Transverse colon (tissue), 4 donors: ENCODE measurements at regions of chr13 and their contacts with region 1.

Region 1: GRCh38 chr13:107211073-107211472 is 643.1 kb upstream of the ARGLU1 start:
- DNase-seq: peak; percentile 78
- H3K4me3 ChIP-seq: peak overlapping the region in 1 of 4 donors; percentile 5
- H3K27ac ChIP-seq: no peak overlapping the region
- H3K4me1 ChIP-seq: peaks cover 0 to 8% (median 3%) of the 10 kb centered on the region in 4 donors
- H3K27me3 ChIP-seq: no peaks in the 10 kb centered on the region
- CTCF ChIP-seq: peak; percentile 79 to 84 (median 80)
- EP300 ChIP-seq: no peak
- POLR2A ChIP-seq: no peak

Region 2: GRCh38 chr13:106867249-106867648 is 343.8 kb before region 1 on chr13:
- in situ Hi-C with region 1: no loop called
- intact Hi-C with region 1: no loop called
- DNase-seq: no peak
- H3K4me3 ChIP-seq: peak overlapping the region in 2 of 4 donors; percentile 4 to 18
- H3K27ac ChIP-seq: no peak overlapping the region
- H3K4me1 ChIP-seq: no peaks in the 10 kb centered on the region
- H3K27me3 ChIP-seq: no peaks in the 10 kb centered on the region
- CTCF ChIP-seq: no peak
- EP300 ChIP-seq: no peak
- POLR2A ChIP-seq: no peak

Region 3: GRCh38 chr13:107642831-107643230 is 431.8 kb after region 1 on chr13:
- in situ Hi-C with region 1: loop called in 1 of 4 experiments (anchors 25 kb)
- intact Hi-C with region 1: no loop called
- DNase-seq: no peak
- H3K4me3 ChIP-seq: no peak overlapping the region
- H3K27ac ChIP-seq: no peak overlapping the region
- H3K4me1 ChIP-seq: no peaks in the 10 kb centered on the region
- H3K27me3 ChIP-seq: no peaks in the 10 kb centered on the region
- CTCF ChIP-seq: no peak
- EP300 ChIP-seq: no peak
- POLR2A ChIP-seq: no peak

Region 4: GRCh38 chr13:107650081-107650701 is 439.1 kb after region 1 on chr13:
- in situ Hi-C with region 1: loop called in 3 of 4 experiments (anchors 25 kb)
- intact Hi-C with region 1: no loop called
- DNase-seq: peak; percentile 13
- H3K4me3 ChIP-seq: no peak overlapping the region
- H3K27ac ChIP-seq: no peak overlapping the region
- H3K4me1 ChIP-seq: no peaks in the 10 kb centered on the region
- H3K27me3 ChIP-seq: no peaks in the 10 kb centered on the region
- CTCF ChIP-seq: peak; percentile 39 to 58 (median 55)
- EP300 ChIP-seq: no peak
- POLR2A ChIP-seq: no peak

Region 5: DNA sequence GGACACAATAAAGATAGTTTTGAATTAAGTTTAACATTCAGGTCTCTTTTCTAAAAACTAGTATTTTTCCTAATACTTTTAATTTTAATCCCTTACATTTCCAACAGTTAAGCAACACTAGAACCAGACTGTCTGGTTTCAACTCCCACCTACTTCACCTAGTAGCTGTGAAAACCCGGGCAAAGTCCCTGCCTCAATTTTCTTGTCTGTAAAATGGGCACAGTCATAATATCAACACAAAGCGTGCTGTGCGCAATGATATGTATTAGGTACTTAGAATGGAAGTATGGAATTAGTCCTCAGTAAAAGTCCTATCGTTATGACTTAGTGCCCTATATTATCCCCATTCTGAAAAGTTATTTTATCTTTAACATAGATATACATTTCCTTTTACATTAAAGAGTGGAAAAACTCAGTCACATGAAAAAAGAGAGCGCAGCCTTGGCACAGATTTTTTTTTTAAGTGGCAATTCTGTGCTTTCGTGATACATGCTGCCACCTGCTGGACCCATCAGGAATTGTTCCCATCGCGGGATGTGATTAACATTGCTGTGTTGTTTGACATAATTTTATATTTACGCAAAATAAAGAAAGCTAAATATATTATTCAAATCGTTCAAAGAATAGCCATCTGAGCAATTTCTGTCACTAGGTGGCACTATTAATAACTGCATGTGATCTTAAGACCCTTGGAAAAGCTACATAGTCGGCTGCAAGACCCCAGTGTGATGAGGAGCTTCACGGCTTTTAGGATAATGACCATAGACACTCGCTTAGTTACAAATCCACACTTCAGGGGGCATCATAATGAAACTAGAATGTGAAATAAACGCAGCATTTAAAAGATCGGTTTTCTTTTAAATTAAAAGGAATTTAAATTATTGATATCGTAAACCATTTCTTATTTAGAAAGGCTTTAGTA is 944.4 kb after region 1 on chr13:
- in situ Hi-C with region 1: loop called (anchors 10 to 25 kb)
- intact Hi-C with region 1: loop called (anchors 5 kb)
- DNase-seq: peak; percentile 74
- H3K4me3 ChIP-seq: no peak overlapping the region
- H3K27ac ChIP-seq: peak overlapping the region; percentile 60 to 82 (median 72)
- H3K4me1 ChIP-seq: peaks cover 0 to 13% (median 3%) of the 10 kb centered on the region in 4 donors
- H3K27me3 ChIP-seq: no peaks in the 10 kb centered on the region
- CTCF ChIP-seq: peak; percentile 81 to 89 (median 84)
- EP300 ChIP-seq: no peak
- POLR2A ChIP-seq: no peak